ENCODE measurements at regions of chr15 and their contacts with region 1.

Region 1: GRCh38 chr15:69475769-69476358 is 23.2 kb downstream of the RPLP1 start:
- DNase-seq: peak; percentile 80
- ATAC-seq: peak; percentile 80

Region 2: DNA sequence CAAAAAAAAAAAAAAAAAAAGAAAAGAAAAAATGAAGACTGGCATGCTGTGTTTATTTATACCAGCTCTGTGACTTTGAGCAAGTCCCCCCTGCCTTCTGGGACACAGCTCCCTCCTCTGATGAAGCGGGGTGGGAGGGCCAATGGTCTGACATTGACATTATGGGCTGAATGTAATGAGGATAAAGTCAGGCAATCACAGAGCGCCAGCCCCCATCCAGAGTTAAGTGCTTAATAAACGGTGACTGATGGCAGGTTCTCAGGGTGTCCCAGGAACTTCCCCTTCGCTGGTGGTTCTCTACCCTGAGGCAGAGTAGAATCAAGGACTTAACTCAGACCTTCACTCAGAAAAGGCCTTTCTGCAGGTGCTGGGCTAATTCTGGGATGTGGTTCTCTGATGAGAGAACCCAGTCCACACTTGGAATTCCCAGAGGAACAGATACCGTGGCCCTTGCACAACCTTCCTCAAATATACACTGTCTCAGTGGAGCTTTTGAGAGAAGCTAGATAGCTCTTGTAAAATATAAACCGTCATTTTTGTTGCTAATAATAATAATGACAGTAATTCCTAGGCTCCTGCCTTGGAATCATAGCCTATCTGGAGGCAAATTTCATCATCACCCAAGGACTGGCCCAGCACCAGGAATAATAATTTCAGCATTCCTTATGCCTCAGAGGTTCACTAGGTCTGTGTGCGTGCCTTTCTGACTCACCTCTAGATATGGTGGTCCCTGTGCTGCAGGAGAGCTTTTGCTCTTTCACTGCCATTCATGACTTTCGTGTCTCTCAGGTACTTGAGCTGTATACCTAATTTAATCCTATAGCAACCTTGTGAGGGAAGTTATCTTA is 92.5 kb after region 1 on chr15:
- intact Hi-C with region 1: loop called (anchors 10 kb)
- DNase-seq: no peak
- ATAC-seq: no peak

Region 3: DNA sequence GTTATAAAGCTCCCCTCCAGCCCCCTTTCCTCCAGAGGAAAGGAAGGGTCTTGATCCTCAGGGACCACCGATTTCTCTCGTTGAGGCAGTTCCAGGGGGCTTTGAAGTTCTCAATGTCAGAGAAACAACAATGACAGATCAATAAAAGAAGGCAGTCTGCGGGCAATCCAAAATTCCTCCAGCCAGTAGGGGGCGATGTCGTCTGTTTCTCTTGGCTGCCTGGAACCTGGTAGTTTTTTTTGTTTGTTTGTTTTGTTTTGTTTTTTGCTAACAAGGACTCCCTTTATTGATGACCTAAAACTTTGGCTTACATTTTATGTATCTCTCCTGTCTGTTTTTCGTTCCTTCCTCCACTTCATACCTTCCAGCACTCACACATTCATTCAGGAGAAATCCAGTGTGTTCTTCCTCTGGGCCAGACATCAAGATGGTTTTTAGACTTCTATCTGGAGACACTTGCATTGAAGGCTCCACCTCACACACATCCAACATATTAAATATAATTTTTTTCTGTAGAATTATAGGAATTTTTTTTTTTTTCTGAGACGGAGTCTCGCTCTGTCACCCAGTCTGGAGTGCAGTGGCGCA is 253.4 kb after region 1 on chr15:
- intact Hi-C with region 1: loop called (anchors 5 kb)
- DNase-seq: no peak
- ATAC-seq: no peak

Region 4: GRCh38 chr15:70362886-70363285 is 887.0 kb after region 1 on chr15:
- intact Hi-C with region 1: loop called (anchors 10 kb)
- DNase-seq: peak; percentile 37
- ATAC-seq: peak; percentile 74

Region 5: GRCh38 chr15:70466895-70467529 is 991.1 kb after region 1 on chr15:
- intact Hi-C with region 1: loop called (anchors 5 kb)
- DNase-seq: no peak
- ATAC-seq: no peak

Region 6: DNA sequence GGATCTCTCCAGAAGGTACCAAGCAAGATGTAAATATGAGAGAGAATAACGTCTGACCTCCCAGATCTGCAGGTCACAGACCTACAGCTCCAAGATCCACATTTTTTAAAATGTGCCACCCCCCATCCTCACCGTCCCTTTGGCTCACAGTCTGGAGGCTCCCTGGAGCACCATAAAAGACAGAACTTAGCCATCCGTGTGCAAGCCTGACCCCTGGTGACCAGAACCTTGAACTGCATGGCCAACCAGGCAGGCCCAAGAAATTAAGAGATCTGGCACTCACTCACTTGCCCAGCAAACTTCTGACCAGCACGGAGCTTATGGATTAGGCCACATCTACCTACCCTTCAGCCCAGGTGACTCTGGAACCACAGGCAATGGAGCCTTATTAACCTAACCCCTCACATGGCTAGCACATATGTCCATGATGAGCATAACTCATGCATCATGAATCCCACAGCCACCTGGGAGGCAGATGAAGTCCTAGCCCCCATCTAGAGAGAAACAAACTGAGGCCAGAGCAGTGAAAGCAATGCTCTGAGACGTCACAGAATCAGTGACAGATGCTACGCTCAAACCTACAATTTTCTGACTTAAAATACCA is 1012.2 kb after region 1 on chr15:
- intact Hi-C with region 1: loop called (anchors 2 kb)
- DNase-seq: no peak
- ATAC-seq: peak; percentile 46

Measured in Right ventricle myocardium inferior (tissue), 1 donor.